Activated CD4-positive, alpha-beta T cell treated with anti-CD3 and anti-CD28 coated beads, Interleukin-2, amount 10 ng/mL, durations not matched to agents 24 days and 14 days (primary cell): ENCODE measurements at regions of chr17 and their contacts with region 1.

Region 1: GRCh38 chr17:76557368-76558197 is 17.7 kb downstream of the PRCD start:
- DNase-seq: peak; percentile 99
- H3K4me3 Mint-ChIP-seq: peak overlapping the region; percentile 98
- H3K27ac Mint-ChIP-seq: peak overlapping the region; percentile 97
- H3K4me1 Mint-ChIP-seq: peaks cover 46% of the 10 kb centered on the region
- H3K27me3 Mint-ChIP-seq: no peaks in the 10 kb centered on the region

Region 2: GRCh38 chr17:76515274-76515949 is 42.2 kb before region 1 on chr17:
- intact Hi-C with region 1: loop called (anchors 2 kb)
- DNase-seq: peak; percentile 95
- H3K4me3 Mint-ChIP-seq: peak overlapping the region; percentile 76
- H3K27ac Mint-ChIP-seq: peak overlapping the region; percentile 97
- H3K4me1 Mint-ChIP-seq: peaks cover 62% of the 10 kb centered on the region
- H3K27me3 Mint-ChIP-seq: no peaks in the 10 kb centered on the region

Region 3: GRCh38 chr17:76623271-76624146 is 65.9 kb after region 1 on chr17:
- intact Hi-C with region 1: loop called (anchors 1 kb)
- DNase-seq: peak; percentile 92
- H3K4me3 Mint-ChIP-seq: no peak overlapping the region
- H3K27ac Mint-ChIP-seq: no peak overlapping the region
- H3K4me1 Mint-ChIP-seq: peaks cover 6% of the 10 kb centered on the region
- H3K27me3 Mint-ChIP-seq: peaks cover 22% of the 10 kb centered on the region

Region 4: GRCh38 chr17:76671123-76671911 is 113.7 kb after region 1 on chr17:
- intact Hi-C with region 1: loop called (anchors 2 kb)
- DNase-seq: peak; percentile 100
- H3K4me3 Mint-ChIP-seq: peak overlapping the region; percentile 96
- H3K27ac Mint-ChIP-seq: peak overlapping the region; percentile 94
- H3K4me1 Mint-ChIP-seq: peaks cover 25% of the 10 kb centered on the region
- H3K27me3 Mint-ChIP-seq: peaks cover 13% of the 10 kb centered on the region